ENCODE measurements at regions of chr9 and their contacts with region 1.

Region 1: DNA sequence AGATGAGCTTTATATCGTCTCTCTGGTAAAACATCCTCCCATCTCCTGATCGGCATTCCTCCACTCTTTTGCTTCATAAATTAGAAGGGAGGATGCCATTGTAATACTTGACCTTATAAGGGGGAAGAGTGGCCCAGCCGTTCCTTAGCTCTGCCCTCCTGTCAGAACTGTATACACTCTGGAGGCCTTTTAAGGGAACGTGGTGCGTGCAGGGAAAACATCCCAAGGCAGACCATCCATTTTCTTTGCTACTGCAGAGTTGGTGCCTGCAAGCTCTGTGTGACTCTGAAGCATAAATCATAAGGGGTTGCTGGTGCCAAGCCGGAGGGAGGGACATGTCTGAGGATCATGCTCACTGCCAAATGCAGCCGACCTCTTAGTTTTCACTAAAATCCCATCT is 90.4 kb downstream of the PGM5 start:
- DNase-seq: no peak
- H3K4me3 ChIP-seq: no peak overlapping the region
- H3K27ac ChIP-seq: no peak overlapping the region
- H3K4me1 ChIP-seq: no peaks in the 10 kb centered on the region
- CTCF ChIP-seq: no peak

Region 2: DNA sequence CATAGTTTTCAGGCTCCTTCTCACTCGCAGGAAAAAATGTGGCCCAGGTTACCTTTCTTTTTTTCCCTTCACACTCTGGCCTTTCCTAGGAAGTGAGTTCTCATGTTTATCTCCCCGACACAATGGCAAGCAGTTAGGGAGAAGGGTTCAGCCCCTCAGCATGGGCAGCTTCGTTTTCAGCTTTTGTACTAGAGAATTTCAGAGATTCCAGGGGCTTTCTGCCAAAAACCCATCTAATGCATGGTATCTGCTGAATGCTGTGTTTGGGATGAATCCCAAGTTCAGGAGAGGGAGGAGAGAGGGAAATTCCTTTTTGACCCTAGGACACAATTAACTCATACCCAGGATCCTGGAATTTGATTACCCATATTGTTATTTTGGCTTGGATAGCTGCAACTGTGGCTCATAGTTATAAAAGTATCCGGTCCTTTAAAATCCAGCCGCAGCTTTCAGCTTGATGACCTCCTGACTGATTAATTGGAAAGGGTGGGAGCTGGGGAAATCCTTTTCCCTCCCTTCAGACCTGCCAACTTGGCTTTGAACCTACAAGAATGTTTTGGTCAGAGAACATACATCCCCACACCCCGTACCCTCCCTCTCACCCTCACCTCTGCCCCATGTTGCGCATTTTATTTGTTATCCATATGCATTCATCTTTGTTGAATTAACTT is 15.4 kb after region 1 on chr9:
- CTCF ChIA-PET with region 1: no interaction called
- POLR2A ChIA-PET with region 1: interaction called, 4 read pairs
- intact Hi-C with region 1: loop called (anchors 2 kb)
- DNase-seq: no peak
- H3K4me3 ChIP-seq: no peak overlapping the region
- H3K27ac ChIP-seq: no peak overlapping the region
- H3K4me1 ChIP-seq: no peaks in the 10 kb centered on the region
- CTCF ChIP-seq: no peak

Region 3: DNA sequence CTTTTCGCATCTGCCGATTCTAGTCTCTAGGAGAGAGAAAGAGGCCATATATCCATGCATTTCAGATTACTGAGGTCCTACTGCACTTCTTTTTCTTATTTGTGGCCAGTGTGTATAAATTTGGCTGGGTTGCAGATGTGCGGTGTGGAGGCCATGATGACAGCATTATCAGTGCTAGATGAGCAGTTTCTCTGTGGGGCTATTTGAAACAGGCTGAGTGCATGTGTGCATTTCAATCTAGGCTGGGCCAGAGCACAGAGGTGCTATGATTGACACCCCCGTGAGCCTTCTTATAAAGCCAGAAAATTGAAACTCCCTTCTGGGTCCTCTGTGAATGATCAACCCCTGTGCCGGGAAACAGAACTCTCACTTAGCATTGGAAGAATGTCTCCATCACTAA is 23.8 kb after region 1 on chr9:
- CTCF ChIA-PET with region 1: no interaction called
- POLR2A ChIA-PET with region 1: interaction called, 6 read pairs
- intact Hi-C with region 1: loop called (anchors 2 kb)
- DNase-seq: no peak
- H3K4me3 ChIP-seq: no peak overlapping the region
- H3K27ac ChIP-seq: no peak overlapping the region
- H3K4me1 ChIP-seq: no peaks in the 10 kb centered on the region
- CTCF ChIP-seq: no peak

Measured in OCI-LY7 (cell line).